ENCODE measurements at regions of chr1 and their contacts with region 1.

Region 1: DNA sequence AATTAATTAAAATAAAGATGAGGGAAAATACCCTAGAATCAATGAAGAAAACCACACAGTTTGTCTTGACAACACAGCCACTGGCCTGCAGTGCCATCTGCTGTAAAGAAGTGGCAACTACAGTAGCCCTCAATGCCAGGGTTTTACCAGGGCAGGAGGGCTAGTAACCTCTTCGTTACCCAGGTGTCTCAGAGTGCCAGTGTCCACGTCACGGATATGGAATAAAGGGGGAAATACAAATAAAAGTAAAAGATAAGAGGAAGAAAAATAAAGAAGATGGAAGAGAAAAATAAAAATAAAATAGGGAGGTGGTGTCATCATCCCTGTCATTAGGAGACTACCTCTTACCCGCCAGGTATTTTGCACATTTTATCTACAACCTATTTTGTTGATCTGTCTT is 14.2 kb upstream of the SLC44A3 start:
- DNase-seq: peak; percentile 70
- ATAC-seq: peak; percentile 68
- H3K4me3 Mint-ChIP-seq: no peak overlapping the region
- H3K27ac Mint-ChIP-seq: no peak overlapping the region
- H3K4me1 Mint-ChIP-seq: peaks cover 13% of the 10 kb centered on the region
- H3K27me3 Mint-ChIP-seq: peaks cover 4% of the 10 kb centered on the region

Region 2: DNA sequence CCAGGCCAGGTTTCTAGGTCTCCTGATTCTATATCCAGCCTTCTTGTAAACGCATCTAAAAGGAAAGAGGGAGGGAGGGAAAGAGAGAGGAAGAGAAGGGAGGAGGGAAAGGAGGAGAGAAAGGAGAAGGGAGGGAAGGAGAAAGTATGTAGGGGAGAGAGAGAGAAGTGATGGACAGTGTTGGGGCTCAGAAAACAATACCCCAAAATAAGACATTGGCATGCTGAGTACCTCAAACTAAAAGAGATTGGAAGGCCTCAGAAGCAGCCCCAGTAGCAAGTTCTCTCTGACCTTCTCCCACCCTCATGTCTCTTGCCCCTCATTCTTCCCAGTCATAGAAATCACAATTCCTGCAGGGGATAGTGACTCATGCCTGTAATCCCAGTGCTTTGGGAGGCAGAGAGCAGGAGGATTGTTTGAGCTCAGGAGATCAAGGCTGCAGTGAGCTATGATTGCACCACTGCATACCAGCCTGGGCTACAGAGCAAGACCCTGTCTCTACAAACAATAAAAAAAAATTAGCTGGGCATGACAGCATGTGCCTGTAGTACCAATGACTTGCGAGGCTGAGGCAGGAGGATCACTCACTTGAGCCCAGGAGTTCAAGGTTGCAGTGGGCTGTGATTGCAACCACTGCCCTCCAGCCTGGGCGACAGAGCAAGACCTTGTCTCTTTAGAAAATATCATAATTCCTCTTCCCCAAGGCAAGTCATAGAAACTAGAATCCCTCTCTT is 978.1 kb before region 1 on chr1:
- CTCF ChIA-PET with region 1: no interaction called
- POLR2A ChIA-PET with region 1: no interaction called
- intact Hi-C with region 1: no loop called
- DNase-seq: no peak
- ATAC-seq: no peak
- H3K4me3 Mint-ChIP-seq: no peak overlapping the region
- H3K27ac Mint-ChIP-seq: no peak overlapping the region
- H3K4me1 Mint-ChIP-seq: peaks cover 5% of the 10 kb centered on the region
- H3K27me3 Mint-ChIP-seq: no peaks in the 10 kb centered on the region

Region 3: GRCh38 chr1:94045465-94046056 is 760.4 kb before region 1 on chr1:
- CTCF ChIA-PET with region 1: no interaction called
- POLR2A ChIA-PET with region 1: no interaction called
- intact Hi-C with region 1: loop called in 1 of 2 experiments (anchors 5 kb)
- DNase-seq: peak; percentile 69
- ATAC-seq: peak; percentile 85
- H3K4me3 Mint-ChIP-seq: peak overlapping the region; percentile 36
- H3K27ac Mint-ChIP-seq: no peak overlapping the region
- H3K4me1 Mint-ChIP-seq: peaks cover 2% of the 10 kb centered on the region
- H3K27me3 Mint-ChIP-seq: peaks cover 5% of the 10 kb centered on the region

Region 4: DNA sequence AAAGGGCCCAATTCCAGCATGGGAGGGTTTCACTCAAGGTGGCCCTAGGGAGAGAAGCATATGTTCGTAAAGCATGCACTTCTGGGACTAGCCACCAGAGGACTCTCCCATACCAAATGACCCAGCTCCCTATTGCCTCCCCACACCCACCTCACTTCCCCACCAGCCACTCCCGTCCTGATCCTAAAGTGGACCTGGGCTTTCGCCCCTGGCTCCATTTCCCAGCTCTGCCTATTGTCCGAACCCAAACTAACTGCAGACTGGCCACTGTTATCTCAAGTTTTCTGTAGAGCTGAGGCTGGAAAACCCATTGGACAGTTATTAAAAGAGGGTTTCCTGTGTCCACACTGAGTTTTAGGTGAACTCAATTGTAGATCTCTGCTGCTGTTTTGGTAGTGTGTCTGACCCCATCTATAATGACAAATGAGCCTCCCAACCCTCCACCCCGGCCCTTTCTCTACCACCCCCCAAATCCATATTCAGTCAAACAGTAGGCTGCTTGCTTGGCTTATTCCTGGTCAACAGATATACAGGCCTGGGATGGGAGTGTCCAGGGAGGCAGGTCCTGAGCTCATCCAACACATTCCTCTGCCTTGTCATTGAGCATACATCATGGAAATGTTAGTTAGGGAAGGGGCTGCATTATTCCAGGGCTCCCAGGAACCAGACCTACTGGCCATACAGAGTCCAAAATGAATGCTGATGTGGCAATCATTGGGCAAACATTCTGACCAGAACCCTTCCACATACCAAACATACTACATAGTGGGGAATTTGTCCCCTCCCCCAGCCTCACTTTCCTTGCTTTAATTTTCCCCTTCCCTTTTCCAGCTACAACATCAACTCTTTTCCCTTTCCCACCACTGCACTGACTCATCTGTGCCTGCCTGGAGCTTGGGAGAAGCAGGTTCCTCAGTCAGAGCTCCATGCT is 744.1 kb before region 1 on chr1:
- CTCF ChIA-PET with region 1: interaction called, 3 read pairs
- POLR2A ChIA-PET with region 1: no interaction called
- intact Hi-C with region 1: loop called in 1 of 2 experiments (anchors 2 kb)
- DNase-seq: peak; percentile 64
- ATAC-seq: no peak
- H3K4me3 Mint-ChIP-seq: no peak overlapping the region
- H3K27ac Mint-ChIP-seq: no peak overlapping the region
- H3K4me1 Mint-ChIP-seq: no peaks in the 10 kb centered on the region
- H3K27me3 Mint-ChIP-seq: peaks cover 9% of the 10 kb centered on the region

Region 5: GRCh38 chr1:94481473-94481933 is 324.4 kb before region 1 on chr1:
- CTCF ChIA-PET with region 1: interaction called, 58 read pairs
- POLR2A ChIA-PET with region 1: no interaction called
- intact Hi-C with region 1: loop called (anchors 1 kb)
- DNase-seq: peak; percentile 36
- ATAC-seq: peak; percentile 87
- H3K4me3 Mint-ChIP-seq: no peak overlapping the region
- H3K27ac Mint-ChIP-seq: no peak overlapping the region
- H3K4me1 Mint-ChIP-seq: no peaks in the 10 kb centered on the region
- H3K27me3 Mint-ChIP-seq: no peaks in the 10 kb centered on the region

Region 6: DNA sequence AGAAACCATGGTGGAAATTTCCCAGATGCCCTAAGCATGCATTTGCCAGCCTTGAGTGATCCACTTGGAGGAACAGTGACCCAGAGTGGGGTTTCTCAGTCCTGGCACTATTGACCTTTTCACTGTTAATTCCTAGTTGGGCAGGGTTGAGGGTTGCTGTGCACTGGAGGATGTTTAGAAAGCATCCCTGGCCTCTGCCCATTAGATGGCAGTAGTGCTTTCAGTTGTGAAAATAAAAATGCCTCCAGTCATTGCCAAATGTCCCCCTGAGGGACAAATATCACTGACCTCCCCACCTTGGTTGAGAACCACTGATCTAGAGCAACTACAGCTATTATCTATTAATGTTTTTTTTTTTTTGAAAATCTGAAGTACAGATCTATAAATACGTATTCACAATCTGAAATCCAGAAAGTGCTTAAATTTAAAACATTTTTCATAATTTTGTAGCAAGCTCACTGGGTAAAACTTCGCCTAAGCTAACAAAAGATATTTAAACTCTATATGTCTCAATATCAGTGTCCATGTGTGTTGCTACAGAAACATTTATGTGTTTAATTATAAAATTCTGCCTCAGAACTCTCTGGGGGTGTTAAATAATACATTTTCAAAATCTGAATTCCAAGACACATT is 291.7 kb before region 1 on chr1:
- CTCF ChIA-PET with region 1: interaction called, 7 read pairs
- POLR2A ChIA-PET with region 1: no interaction called
- intact Hi-C with region 1: loop called in 1 of 2 experiments (anchors 1 kb)
- DNase-seq: peak; percentile 18
- ATAC-seq: no peak
- H3K4me3 Mint-ChIP-seq: no peak overlapping the region
- H3K27ac Mint-ChIP-seq: no peak overlapping the region
- H3K4me1 Mint-ChIP-seq: no peaks in the 10 kb centered on the region
- H3K27me3 Mint-ChIP-seq: no peaks in the 10 kb centered on the region

Region 7: GRCh38 chr1:94522304-94522703 is 283.6 kb before region 1 on chr1:
- CTCF ChIA-PET with region 1: interaction called, 4 read pairs
- POLR2A ChIA-PET with region 1: no interaction called
- intact Hi-C with region 1: loop called in 1 of 2 experiments (anchors 10 kb)
- DNase-seq: no peak
- ATAC-seq: no peak
- H3K4me3 Mint-ChIP-seq: no peak overlapping the region
- H3K27ac Mint-ChIP-seq: no peak overlapping the region
- H3K4me1 Mint-ChIP-seq: no peaks in the 10 kb centered on the region
- H3K27me3 Mint-ChIP-seq: no peaks in the 10 kb centered on the region